Activated T-helper 2 cell treated with anti-CD3 and anti-CD28 coated beads, Interferon-gamma antibody, Interleukin-2, Interleukin-4, amounts not matched to agents 10 μg/mL and 5 μg/mL and 100 μg/mL, durations not matched to agents 14 hours and 24 hours and 36 hours (primary cell): ENCODE measurements at regions of chr9 and their contacts with region 1.

Region 1: DNA sequence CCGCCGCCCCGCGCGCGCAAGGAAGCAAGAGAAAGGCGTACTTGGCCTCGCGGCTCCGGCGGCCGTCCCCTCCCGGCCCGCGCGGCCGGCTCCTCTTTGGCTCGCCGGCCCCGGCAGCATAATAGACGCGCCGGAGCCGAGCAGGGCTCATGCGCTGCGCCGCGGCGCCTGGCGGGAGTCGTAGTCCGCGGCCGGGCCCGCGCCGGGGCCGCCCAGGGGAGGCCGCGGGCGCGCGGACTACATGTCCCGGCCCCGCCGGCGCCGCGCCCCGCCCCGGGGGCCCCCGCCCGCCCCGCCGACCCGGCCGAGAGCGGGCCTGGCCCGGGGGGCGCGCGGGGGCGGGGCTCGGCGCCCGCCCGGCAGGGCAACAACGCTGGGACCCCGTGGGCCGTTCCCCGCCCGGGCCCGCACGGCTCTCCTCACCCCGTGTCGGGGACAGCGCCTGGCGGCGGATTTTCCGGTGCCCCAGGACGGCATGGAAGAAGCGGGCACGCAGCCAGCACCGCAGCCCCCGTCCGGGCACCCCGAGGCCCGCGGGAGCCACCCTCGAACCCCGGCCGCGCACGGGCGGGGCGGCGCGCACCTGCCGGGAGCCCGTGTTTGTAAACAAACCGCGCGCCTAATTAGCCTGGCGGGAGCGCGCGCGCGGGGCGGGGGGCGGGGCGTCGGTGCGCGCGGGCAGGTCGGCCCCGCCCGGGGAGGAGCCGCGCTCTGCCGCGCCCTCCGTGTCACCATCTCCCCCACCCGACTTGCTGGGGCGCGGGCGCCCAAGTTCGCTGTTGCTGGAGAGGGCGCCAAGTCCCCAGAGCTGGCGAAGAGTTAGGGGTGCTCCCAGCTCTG is at the start of gene BRD3:
- DNase-seq: peak; percentile 77
- H3K4me3 Mint-ChIP-seq: peak within 1 kb of the TSS; percentile 87
- H3K27ac Mint-ChIP-seq: peak within 1 kb of the TSS; percentile 83
- H3K4me1 Mint-ChIP-seq: peaks cover 16% of the 10 kb centered on the region
- H3K27me3 Mint-ChIP-seq: peaks cover 24% of the 10 kb centered on the region
- total RNA-seq, gene BRD3: 37.4 and 43.3 TPM in 2 replicates

Region 2: GRCh38 chr9:133979273-133979920 is 88.7 kb before region 1 on chr9:
- intact Hi-C with region 1: no loop called
- DNase-seq: no peak
- H3K4me3 Mint-ChIP-seq: no peak overlapping the region
- H3K27ac Mint-ChIP-seq: no peak overlapping the region
- H3K4me1 Mint-ChIP-seq: no peaks in the 10 kb centered on the region
- H3K27me3 Mint-ChIP-seq: no peaks in the 10 kb centered on the region

Region 3: GRCh38 chr9:134024828-134025605 is 43.1 kb before region 1 on chr9 and contains the start of gene BRD3OS:
- intact Hi-C with region 1: loop called (anchors 1 kb)
- DNase-seq: peak; percentile 90
- H3K4me3 Mint-ChIP-seq: peak within 1 kb of the TSS; percentile 72
- H3K27ac Mint-ChIP-seq: no peak within 1 kb of the TSS
- H3K4me1 Mint-ChIP-seq: peaks cover 4% of the 10 kb centered on the region
- H3K27me3 Mint-ChIP-seq: peaks cover 3% of the 10 kb centered on the region
- total RNA-seq, gene BRD3OS: 12.3 and 15.8 TPM in 2 replicates

Region 4: DNA sequence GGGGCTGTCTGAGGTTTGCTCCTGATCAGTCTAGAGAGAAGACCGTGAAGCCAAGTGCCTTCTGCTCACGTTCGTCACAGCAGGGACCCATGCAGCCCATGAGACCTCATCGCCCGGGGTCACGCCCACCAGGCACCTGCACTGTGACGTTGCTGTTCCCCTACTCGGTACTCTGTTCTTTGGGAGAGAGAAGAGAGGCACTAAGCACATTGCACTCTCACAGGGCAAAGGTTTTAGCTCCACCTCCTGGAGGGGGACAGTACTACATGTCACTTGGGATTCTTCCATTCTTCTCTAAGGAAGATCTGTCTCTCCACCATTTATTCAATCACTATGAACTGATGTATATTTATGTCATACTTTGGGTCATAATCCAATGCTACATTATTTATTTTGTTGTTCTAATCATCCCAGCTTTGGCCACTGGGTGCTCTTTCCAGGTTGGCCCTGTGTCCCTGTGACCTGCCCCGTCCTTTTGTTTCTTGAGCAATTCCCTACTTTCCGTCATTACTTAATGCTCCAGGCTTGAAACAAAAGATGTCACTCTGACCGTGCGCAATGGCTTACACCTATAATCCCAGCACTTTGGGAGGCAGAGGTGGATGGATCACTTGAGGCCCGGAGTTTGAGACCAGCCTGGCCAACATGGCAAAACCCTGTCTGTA is 31.1 kb after region 1 on chr9:
- intact Hi-C with region 1: loop called (anchors 1 kb)
- DNase-seq: peak; percentile 34
- H3K4me3 Mint-ChIP-seq: no peak overlapping the region
- H3K27ac Mint-ChIP-seq: no peak overlapping the region
- H3K4me1 Mint-ChIP-seq: peaks cover 3% of the 10 kb centered on the region
- H3K27me3 Mint-ChIP-seq: no peaks in the 10 kb centered on the region

Region 5: DNA sequence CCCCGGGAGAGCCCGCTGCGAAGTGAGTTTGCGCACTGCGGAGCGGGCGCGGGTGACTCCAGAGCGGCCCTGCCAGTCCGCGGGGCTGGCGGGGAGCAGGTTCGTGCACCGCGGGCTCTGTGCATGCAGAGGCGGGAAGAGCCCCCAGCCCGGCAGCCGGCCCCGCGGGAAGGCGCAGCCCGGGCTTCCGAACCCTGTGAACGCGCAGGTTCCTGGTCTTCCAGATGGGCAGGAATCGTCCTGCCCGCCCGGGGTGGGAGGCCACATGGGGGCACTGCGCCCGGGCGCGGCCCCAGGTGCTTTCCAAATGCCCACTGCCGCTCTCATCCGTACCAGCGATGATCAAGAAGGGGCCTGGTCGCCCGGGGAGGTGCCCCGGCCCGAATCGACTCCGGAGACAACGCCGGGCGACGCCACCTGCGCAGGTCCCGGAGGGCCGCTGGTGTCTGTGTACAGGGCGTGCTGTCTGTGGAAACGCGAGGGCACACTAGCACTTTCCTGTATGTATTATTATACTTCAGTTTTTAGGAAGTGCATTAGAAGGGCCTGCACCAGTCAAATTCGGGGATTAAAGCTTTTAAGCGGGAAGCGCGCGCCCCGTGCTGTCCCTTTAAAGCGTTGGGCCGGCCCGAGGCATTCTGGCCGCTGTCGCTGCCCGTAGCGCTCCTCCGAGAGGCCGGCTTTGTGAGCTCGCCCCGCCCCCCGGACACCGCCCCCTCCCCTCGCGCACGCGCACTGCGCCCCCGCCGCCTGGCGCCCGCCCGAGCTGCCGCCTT is 67.4 kb after region 1 on chr9 and contains the start of gene WDR5:
- intact Hi-C with region 1: loop called (anchors 1 kb)
- DNase-seq: peak; percentile 84
- H3K4me3 Mint-ChIP-seq: peak within 1 kb of the TSS; percentile 98
- H3K27ac Mint-ChIP-seq: peak within 1 kb of the TSS; percentile 89
- H3K4me1 Mint-ChIP-seq: peaks cover 21% of the 10 kb centered on the region
- H3K27me3 Mint-ChIP-seq: no peaks in the 10 kb centered on the region
- total RNA-seq, gene WDR5: 54.0 and 58.9 TPM in 2 replicates

Region 6: GRCh38 chr9:134163353-134164196 is 95.5 kb after region 1 on chr9:
- intact Hi-C with region 1: loop called (anchors 1 kb)
- DNase-seq: peak; percentile 62
- H3K4me3 Mint-ChIP-seq: no peak overlapping the region
- H3K27ac Mint-ChIP-seq: no peak overlapping the region
- H3K4me1 Mint-ChIP-seq: peaks cover 9% of the 10 kb centered on the region
- H3K27me3 Mint-ChIP-seq: no peaks in the 10 kb centered on the region

Region 7: GRCh38 chr9:134391314-134392231 is 323.4 kb after region 1 on chr9:
- intact Hi-C with region 1: loop called (anchors 5 kb)
- DNase-seq: peak; percentile 55
- H3K4me3 Mint-ChIP-seq: peak overlapping the region; percentile 78
- H3K27ac Mint-ChIP-seq: peak overlapping the region; percentile 92
- H3K4me1 Mint-ChIP-seq: peaks cover 44% of the 10 kb centered on the region
- H3K27me3 Mint-ChIP-seq: peaks cover 7% of the 10 kb centered on the region